ENCODE measurements at regions of chr2 and their contacts with region 1.

Region 1: GRCh38 chr2:212548450-212548819 is 9.8 kb upstream of the ERBB4 start:
- DNase-seq: no peak

Region 2: DNA sequence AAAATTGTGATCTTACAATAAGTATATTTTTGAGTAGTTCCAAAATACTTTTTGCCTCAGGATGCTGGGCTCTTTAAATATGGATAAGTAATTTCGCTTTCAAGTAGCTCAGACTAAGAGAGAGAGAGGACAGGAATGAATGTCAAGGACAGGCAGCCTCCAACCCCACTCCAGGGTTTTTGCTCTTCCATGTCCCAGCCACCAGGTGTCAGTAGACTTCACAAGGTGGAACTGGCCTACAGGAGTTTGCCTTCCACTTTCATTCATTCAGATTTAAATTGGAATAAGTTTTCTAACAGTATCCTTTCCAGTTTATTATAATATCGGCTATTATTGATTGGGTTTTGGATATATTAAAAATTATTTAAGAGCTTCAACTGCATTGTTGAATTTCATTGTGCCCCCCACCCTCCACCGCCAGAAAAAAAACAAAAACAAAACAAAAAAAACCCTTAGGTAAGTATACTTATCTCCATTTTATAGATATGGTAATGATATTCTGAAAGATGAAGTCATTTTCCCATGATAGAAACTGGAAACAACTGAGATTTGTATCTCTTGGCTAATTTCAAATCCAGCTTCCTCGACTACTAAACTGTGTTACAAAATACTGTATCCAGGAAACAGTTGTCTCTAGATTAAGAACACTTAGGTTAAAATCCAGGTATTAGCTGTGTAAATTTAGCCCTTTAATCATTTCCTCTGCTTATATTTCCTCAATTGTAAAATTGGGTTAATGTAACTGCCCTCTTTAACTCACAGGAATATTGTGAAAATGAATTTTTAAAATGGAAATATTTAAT is 802.9 kb before region 1 on chr2:
- intact Hi-C with region 1: loop called (anchors 5 kb)
- DNase-seq: no peak

Region 3: DNA sequence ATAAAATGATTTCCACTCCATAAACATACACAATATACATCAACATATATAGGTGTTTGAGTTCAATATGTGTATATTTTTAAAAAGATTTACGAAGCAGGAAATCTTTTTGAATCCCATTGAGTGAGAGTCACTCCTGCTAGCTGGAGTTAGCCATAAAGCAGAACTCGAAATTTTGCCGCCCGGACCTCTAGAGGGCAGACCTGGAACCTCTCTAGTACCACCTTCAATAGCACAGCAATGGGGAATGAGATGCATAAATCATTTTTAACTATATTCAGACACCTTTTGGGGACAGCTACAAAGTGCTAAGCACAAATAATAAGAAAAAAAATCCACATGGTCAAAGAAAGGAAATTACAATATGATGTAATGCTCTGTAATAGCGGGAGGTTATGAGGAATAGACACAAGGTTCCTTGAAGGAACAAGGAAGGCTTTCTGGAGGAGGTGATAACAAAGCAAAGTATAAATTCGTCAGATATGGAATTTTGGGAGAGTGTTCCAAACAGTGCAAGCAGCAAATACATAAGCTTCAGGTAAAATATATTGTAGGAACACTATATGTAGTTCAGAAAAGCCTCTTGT is 543.3 kb before region 1 on chr2:
- intact Hi-C with region 1: loop called (anchors 10 kb)
- DNase-seq: no peak

Region 4: DNA sequence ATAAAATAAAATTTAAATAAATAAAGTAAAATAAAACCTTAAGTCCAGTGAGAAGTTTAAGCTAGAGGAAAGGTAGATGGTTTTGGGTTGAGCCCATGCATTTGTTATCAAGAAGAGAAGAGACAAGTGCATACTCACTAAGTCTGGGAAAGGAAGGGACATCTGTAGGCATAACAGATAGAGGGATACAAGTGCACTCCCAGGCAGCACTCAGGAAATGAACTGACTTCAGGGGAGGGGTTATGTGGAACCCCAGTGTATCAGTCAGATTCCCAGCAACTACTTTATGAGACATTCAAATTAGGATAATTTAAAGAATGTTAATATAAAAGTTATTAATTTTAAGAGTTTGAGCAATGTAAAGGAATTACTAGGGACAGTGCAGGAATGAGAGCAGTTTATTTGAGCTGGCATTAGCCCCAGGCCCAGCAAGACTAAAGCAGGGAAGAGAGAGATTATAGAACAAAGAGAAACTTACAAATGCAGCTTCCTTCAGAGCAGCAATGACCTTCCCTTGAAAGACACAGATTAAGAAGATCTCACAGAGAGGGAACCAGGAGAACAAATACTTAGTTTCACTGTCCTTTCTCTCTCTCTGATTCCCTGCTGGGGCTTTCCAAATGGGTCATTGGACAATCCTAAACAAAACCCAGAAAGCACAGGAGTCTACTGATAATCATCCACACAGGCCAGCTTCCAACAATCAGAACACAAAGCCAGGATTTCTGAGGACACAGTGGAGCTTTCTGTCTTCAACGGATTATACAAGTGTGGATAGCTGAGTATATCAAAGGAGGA is 119.6 kb before region 1 on chr2:
- intact Hi-C with region 1: no loop called
- DNase-seq: no peak

Measured in cardiac septum (tissue), 1 donor.